ENCODE measurements at regions of chrX and their contacts with region 1.

Region 1: GRCh38 chrX:120560842-120561633 is at the start of gene CUL4B:
- DNase-seq: peak; percentile 95
- ATAC-seq: peak; percentile 86
- H3K4me3 Mint-ChIP-seq: peak within 1 kb of the TSS; percentile 90
- H3K27ac Mint-ChIP-seq: peak within 1 kb of the TSS; percentile 95
- H3K4me1 Mint-ChIP-seq: peaks cover 21% of the 10 kb centered on the region
- H3K27me3 Mint-ChIP-seq: no peaks in the 10 kb centered on the region
- total RNA-seq, gene CUL4B: 49.2 to 49.6 TPM

Region 2: GRCh38 chrX:119871599-119872395 is 689.2 kb before region 1 on chrX and contains the starts of genes NDUFA1 and RNF113A:
- CTCF ChIA-PET with region 1: no interaction called
- POLR2A ChIA-PET with region 1: no interaction called
- intact Hi-C with region 1: loop called in 1 of 2 experiments (anchors 1 kb)
- DNase-seq: peak; percentile 91
- ATAC-seq: peak; percentile 93
- H3K4me3 Mint-ChIP-seq: peak within 1 kb of the TSS; percentile 100
- H3K27ac Mint-ChIP-seq: peak within 1 kb of the TSS; percentile 99
- H3K4me1 Mint-ChIP-seq: peaks cover 14% of the 10 kb centered on the region
- H3K27me3 Mint-ChIP-seq: no peaks in the 10 kb centered on the region
- total RNA-seq, gene NDUFA1: 37.6 to 101 TPM
- total RNA-seq, gene RNF113A: 26.9 to 29.9 TPM

Region 3: GRCh38 chrX:120468825-120469525 is 92.1 kb before region 1 on chrX and contains the start of gene LAMP2:
- CTCF ChIA-PET with region 1: no interaction called
- POLR2A ChIA-PET with region 1: no interaction called
- intact Hi-C with region 1: loop called in 1 of 2 experiments (anchors 1 kb)
- DNase-seq: peak; percentile 89
- ATAC-seq: peak; percentile 97
- H3K4me3 Mint-ChIP-seq: peak within 1 kb of the TSS; percentile 95
- H3K27ac Mint-ChIP-seq: peak within 1 kb of the TSS; percentile 91
- H3K4me1 Mint-ChIP-seq: peaks cover 22% of the 10 kb centered on the region
- H3K27me3 Mint-ChIP-seq: no peaks in the 10 kb centered on the region
- total RNA-seq, gene LAMP2: 30.4 to 34.5 TPM

Region 4: DNA sequence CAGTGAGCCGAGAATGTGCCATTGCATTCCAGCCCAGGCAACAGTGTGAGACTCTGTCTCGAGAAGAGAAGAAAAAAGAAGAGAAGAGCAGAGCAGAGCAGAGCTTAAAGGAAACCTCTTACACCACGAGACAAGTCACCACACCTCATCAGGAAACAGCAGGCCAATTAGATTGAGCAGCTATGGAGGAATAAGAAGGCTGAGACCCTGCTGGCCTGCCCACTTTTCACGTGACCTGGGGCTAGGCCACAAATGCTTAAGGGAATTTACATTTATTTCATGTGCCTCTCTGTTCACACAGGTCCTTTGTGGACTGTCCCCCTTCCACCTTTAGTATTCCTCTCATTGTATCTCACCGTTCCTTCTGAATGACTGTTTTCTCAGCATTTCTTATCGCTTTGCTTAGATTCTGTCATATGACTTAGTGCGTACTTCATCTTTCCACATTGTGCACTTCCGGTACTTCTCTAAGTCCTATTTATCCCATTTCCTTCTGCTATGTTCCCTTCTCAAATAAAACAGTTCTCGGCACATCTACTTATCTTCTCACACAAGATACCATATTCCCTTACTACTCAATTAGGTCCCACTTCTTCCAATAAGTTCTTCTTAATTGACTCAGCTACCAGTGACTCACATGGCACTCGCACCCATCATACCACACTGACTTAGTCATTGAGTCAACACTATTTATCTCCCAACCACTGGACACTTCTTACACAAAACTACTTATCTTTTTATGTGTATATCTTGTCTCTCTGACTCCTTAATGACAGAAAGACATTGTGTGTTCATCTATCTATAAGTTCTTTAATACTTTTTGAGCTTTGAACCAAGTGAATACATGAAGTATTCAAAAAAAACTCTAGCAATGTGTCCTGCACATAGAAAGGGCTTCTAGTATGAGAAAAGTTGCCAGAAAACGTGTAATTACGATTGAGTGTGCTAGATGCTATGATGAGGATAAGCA is 11.3 kb before region 1 on chrX:
- CTCF ChIA-PET with region 1: no interaction called
- POLR2A ChIA-PET with region 1: no interaction called
- intact Hi-C with region 1: loop called (anchors 1 kb)
- DNase-seq: peak; percentile 48
- ATAC-seq: peak; percentile 98
- H3K4me3 Mint-ChIP-seq: no peak overlapping the region
- H3K27ac Mint-ChIP-seq: peak overlapping the region; percentile 16
- H3K4me1 Mint-ChIP-seq: peaks cover 28% of the 10 kb centered on the region
- H3K27me3 Mint-ChIP-seq: no peaks in the 10 kb centered on the region

Region 5: DNA sequence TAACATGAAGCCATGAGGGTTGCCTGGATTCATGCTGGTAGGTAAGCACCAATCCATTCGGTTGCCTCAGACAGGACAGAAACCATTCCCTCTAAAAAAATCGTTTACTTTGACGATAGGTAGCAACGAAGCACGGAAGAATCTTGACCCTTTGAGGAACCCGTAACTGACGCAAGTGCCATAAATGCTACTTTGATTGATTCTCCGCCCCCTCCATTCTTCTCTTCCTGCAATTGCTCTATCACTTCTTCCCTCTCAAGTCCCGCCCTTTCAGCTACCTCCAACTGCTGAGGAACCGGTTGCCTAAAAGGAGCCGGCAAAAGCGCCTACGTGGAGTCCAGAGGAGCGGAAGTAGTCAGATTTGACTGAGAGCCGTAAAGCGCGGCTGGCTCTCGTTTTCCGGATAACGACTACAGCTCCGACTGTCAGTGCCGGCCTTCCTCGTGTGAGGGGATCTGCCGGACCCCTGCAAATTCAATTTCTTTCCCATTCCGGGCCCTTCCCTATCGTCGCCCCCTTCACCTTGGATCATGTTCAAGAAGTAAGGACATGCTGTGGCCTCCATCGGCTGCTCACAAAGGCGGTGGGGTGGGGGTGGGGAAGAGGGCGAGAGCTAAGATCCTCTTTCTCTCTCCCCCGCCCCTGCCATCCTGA is 42.8 kb after region 1 on chrX and contains the start of gene MCTS1:
- CTCF ChIA-PET with region 1: interaction called, 3 read pairs
- POLR2A ChIA-PET with region 1: interaction called, 24 read pairs
- intact Hi-C with region 1: loop called (anchors 1 kb)
- DNase-seq: peak; percentile 87
- ATAC-seq: peak; percentile 98
- H3K4me3 Mint-ChIP-seq: peak within 1 kb of the TSS; percentile 96
- H3K27ac Mint-ChIP-seq: peak within 1 kb of the TSS; percentile 97
- H3K4me1 Mint-ChIP-seq: peaks cover 5% of the 10 kb centered on the region
- H3K27me3 Mint-ChIP-seq: no peaks in the 10 kb centered on the region
- total RNA-seq, gene MCTS1: 47.8 to 73.3 TPM